ENCODE measurements at regions of chr11 and their contacts with region 1.

Region 1: DNA sequence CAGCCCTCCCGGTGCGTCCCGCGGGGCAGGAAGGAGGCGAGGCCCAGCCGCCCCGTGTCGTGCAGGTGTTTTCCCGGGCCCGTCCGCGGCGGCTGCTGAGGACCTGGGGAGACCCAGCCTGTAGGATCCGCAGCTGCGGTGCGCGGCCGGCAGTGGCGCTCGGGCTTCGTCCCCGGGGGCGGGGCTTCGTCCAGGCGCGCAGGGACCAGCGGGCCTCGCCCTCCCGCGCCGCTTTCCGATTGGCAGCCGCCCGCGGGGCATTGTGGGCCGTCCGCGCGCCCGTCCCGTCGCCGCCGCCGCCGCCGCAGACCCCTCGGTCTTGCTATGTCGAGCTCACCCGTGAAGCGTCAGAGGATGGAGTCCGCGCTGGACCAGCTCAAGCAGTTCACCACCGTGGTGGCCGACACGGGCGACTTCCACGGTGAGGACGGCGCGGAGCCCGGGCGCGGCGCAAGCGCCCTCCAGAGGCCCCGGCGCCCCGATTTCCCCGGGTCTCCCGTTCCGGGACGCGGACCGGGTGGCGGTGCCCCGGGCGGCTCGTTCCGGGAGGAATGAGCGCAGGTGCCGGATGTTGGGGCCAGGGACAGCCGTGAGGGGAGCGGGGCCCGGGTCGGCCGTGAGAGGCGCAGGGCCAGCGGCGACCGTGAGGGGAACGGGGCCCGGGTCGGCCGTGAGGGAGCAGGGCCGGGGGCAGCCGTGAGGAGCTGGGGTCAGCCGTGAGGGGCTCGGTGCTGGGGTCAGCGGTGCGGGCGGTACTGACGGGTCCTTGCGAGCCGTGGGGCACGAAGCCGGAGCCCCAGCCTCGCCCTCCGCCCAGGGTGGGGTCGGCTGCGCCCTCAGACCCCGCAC is at the start of gene TALDO1:
- DNase-seq: peak; percentile 37
- H3K4me3 ChIP-seq: peak within 1 kb of the TSS; percentile 81
- H3K27ac ChIP-seq: peak within 1 kb of the TSS; percentile 74
- H3K27me3 ChIP-seq: no peaks in the 10 kb centered on the region
- CTCF ChIP-seq: peak; percentile 1; the same call in 1 of the 2 replicates
- polyA plus RNA-seq, gene TALDO1: 242 and 286 TPM in 2 replicates

Region 2: GRCh38 chr11:506238-506994 is 241.0 kb before region 1 on chr11:
- CTCF ChIA-PET with region 1: no interaction called
- POLR2A ChIA-PET with region 1: no interaction called
- DNase-seq: peak; percentile 97
- H3K4me3 ChIP-seq: peak overlapping the region; percentile 95
- H3K27ac ChIP-seq: peak overlapping the region; percentile 99
- H3K27me3 ChIP-seq: no peaks in the 10 kb centered on the region
- CTCF ChIP-seq: no peak

Region 3: DNA sequence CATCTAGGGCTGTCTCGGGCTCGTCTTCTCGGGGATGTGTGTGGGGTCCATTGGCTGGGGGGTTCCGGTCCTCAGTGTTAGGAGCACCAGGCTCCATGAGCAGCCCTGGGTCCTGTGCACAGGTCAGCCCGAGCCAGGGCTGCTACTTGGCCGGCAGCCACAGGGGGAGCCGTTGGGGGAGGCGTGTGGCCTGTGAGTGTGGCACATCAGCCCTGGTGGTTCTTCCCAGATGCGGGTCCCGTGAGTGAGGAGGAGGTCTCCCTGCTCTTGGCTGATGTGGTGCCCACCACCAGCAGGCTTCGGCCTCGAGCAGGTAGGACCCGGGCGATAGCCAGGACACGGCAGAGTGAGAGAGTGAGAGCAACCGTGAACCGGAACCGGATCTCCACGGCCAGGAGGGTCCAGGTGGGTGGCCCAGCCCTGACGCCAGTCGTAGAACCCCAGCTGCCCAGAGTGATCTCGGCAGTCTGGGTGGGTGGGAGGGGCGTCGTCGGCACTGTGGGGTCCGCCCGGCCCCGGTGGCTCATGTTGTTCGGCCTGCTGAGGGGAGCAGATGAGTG is 150.1 kb before region 1 on chr11:
- CTCF ChIA-PET with region 1: no interaction called
- POLR2A ChIA-PET with region 1: no interaction called
- DNase-seq: no peak
- H3K4me3 ChIP-seq: no peak overlapping the region
- H3K27ac ChIP-seq: no peak overlapping the region
- H3K27me3 ChIP-seq: no peaks in the 10 kb centered on the region
- CTCF ChIP-seq: no peak

Region 4: GRCh38 chr11:761526-762108 is 14.2 kb after region 1 on chr11:
- CTCF ChIA-PET with region 1: interaction called, 3 read pairs
- POLR2A ChIA-PET with region 1: interaction called, 17 read pairs
- DNase-seq: no peak
- H3K4me3 ChIP-seq: no peak overlapping the region
- H3K27ac ChIP-seq: no peak overlapping the region
- H3K27me3 ChIP-seq: no peaks in the 10 kb centered on the region
- CTCF ChIP-seq: no peak

Region 5: DNA sequence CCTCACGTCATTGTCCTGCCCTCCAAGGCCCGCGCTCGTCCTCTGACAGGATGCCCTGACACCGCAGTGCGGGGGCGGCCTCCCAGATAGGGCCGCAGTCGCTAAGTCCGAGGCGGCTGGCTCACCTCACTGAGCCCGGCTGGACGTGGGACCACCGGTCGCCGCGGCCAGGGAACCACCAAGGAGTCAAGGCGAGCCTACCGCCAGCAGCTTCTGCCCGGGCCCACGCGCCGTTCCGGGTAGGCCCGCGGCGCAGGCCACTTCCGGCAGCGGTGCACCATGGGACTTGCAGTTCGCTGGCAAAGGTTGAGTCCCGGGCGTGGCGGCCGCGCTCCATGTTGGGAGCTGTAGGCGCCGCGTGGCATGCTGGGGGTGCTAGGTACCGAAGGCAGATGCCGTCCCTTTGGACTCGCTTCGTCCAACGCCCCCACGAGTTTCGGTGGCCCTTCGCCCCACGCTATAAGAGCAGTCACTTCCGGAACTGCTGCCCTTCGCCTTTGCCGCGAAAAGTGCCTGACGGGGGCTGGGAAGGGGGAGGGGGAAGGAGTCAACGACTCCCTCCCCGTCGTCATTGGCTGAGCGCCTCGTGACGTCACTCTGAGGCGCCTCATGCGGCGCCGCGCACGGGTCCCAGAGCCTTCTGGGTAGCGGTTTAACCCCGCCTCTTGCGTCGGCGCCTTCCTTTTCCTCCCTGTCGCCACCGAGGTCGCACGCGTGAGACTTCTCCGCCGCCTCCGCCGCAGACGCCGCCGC is 62.1 kb after region 1 on chr11 and contains the start of gene RPLP2:
- CTCF ChIA-PET with region 1: no interaction called
- POLR2A ChIA-PET with region 1: no interaction called
- DNase-seq: peak; percentile 89
- H3K4me3 ChIP-seq: peak within 1 kb of the TSS; percentile 69
- H3K27ac ChIP-seq: peak within 1 kb of the TSS; percentile 99
- H3K27me3 ChIP-seq: no peaks in the 10 kb centered on the region
- CTCF ChIP-seq: no peak
- polyA plus RNA-seq, gene RPLP2: 940 and 1,115 TPM in 2 replicates

Region 6: GRCh38 chr11:832321-833113 is 85.1 kb after region 1 on chr11 and contains the start of gene CD151:
- CTCF ChIA-PET with region 1: no interaction called
- POLR2A ChIA-PET with region 1: interaction called, 11 read pairs
- DNase-seq: no peak
- H3K4me3 ChIP-seq: peak within 1 kb of the TSS; percentile 77
- H3K27ac ChIP-seq: peak within 1 kb of the TSS; percentile 57
- H3K27me3 ChIP-seq: no peaks in the 10 kb centered on the region
- CTCF ChIP-seq: no peak
- polyA plus RNA-seq, gene CD151: 559 and 909 TPM in 2 replicates

Region 7: DNA sequence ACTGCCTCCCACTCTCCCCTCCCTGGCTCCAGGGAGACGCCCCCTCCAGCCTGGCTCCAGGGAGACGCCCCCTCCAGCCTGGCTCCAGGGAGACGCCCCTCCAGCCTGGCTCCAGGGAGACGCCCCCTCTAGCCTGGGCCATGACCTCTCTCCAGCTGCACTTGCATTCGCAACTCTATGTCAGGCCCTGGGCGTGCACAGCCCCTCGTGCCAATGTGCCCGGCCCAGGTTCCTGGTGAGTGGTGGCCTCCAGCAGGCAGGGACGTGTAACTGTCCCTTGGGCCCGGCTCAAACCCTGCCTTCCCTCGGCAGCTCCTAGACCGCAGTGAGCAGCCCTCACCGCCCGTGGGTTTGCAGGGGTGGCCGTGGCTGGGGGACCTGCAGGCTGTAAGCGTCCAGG is 282.3 kb after region 1 on chr11:
- CTCF ChIA-PET with region 1: no interaction called
- POLR2A ChIA-PET with region 1: no interaction called
- DNase-seq: no peak
- H3K4me3 ChIP-seq: no peak overlapping the region
- H3K27ac ChIP-seq: no peak overlapping the region
- H3K27me3 ChIP-seq: no peaks in the 10 kb centered on the region
- CTCF ChIP-seq: no peak